ENCODE measurements at regions of chr6 and their contacts with region 1.

Region 1: GRCh38 chr6:30914076-30914853 is at the start of gene VARS2:
- DNase-seq: peak; percentile 83
- ATAC-seq: peak; percentile 85
- H3K4me3 Mint-ChIP-seq: peak within 1 kb of the TSS; percentile 90
- H3K27ac Mint-ChIP-seq: peak within 1 kb of the TSS; percentile 90
- H3K4me1 Mint-ChIP-seq: peaks cover 22% of the 10 kb centered on the region
- H3K27me3 Mint-ChIP-seq: no peaks in the 10 kb centered on the region
- CTCF ChIP-seq: no peak
- total RNA-seq, gene VARS2: 65.6 to 74.1 TPM (median 69.9 TPM) in 3 replicates

Region 2: GRCh38 chr6:30828027-30828960 is 86.0 kb before region 1 on chr6:
- CTCF ChIA-PET with region 1: interaction called, 38 read pairs
- POLR2A ChIA-PET with region 1: no interaction called
- DNase-seq: peak; percentile 87
- ATAC-seq: peak; percentile 81
- H3K4me3 Mint-ChIP-seq: no peak overlapping the region
- H3K27ac Mint-ChIP-seq: peak overlapping the region; percentile 66; the same call in 1 of the 2 replicates
- H3K4me1 Mint-ChIP-seq: peaks cover 40% of the 10 kb centered on the region
- H3K27me3 Mint-ChIP-seq: no peaks in the 10 kb centered on the region
- CTCF ChIP-seq: peak; percentile 79

Region 3: GRCh38 chr6:30883685-30884520 is 30.4 kb before region 1 on chr6 and contains the start of gene DDR1:
- CTCF ChIA-PET with region 1: interaction called, 56 read pairs
- POLR2A ChIA-PET with region 1: interaction called, 12 read pairs
- DNase-seq: peak; percentile 58
- ATAC-seq: peak; percentile 4
- H3K4me3 Mint-ChIP-seq: peak within 1 kb of the TSS; percentile 93
- H3K27ac Mint-ChIP-seq: peak within 1 kb of the TSS; percentile 99
- H3K4me1 Mint-ChIP-seq: peaks cover 71% of the 10 kb centered on the region
- H3K27me3 Mint-ChIP-seq: no peaks in the 10 kb centered on the region
- CTCF ChIP-seq: no peak
- total RNA-seq, gene DDR1: 195 to 230 TPM (median 203 TPM) in 3 replicates

Region 4: DNA sequence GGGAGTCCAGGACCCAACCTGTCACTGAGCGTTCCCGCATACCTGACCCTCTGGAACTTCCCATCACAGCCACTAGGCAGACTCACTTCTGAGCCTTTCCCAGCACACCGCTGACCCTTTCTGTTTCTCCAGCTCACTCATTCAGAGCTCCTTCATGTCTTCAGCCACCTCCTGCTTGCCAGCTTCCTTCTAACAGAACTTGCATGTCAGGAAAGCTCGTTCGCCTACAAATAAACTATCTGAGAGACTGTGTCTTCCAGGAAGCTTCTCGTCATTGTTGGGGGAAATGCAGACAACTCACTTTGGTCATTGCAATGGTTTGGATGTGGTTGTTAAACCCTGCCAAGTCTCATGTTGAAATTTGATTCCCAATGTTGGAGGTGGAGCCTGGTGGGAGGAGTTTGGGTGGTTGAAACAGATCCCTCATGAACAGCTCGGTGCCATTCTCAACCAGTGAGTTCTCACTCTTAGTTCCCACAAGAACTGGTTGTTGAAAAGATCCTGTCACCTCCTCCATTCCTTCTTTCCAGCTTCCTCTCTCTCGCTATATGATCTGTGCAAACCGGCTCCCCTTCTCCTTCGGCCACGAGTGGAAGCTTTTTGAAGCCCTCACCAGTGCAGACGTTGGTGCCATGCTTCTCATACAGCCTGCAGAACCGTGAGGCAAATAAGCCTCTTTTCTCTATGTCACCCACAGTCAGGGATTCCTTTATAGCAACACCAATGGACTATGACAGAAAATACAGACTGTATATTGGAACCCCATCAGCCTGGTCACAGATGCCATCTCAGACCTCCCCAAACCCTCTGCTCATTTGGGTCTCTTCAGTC is 67.9 kb after region 1 on chr6:
- CTCF ChIA-PET with region 1: interaction called, 15 read pairs
- POLR2A ChIA-PET with region 1: interaction called, 3 read pairs
- DNase-seq: peak; percentile 67
- ATAC-seq: peak; percentile 99
- H3K4me3 Mint-ChIP-seq: peak overlapping the region; percentile 57
- H3K27ac Mint-ChIP-seq: peak overlapping the region; percentile 92
- H3K4me1 Mint-ChIP-seq: peaks cover 21% of the 10 kb centered on the region
- H3K27me3 Mint-ChIP-seq: no peaks in the 10 kb centered on the region; the same call in none of the 2 replicates
- CTCF ChIP-seq: no peak

Region 5: DNA sequence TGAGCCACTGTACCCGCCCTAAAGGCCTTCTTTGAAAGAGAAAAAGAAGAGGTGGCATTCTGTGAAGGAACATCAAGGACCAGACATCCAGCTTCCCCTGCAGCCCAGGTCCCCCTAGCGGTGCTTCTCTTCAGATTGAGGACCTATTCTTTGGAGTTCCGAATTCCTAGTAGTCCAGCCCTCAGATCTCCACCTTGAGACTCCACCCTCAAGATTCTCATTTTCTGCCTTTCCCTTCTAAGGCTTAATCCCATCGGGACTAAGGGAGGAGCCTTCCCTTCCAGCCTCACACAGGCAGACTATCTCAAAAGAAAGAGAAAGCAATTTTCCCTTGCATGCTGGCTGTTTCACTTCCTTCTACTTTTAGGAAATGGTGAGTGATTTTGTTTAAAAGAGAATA is 128.5 kb after region 1 on chr6:
- CTCF ChIA-PET with region 1: interaction called, 19 read pairs
- POLR2A ChIA-PET with region 1: interaction called, 4 read pairs
- DNase-seq: peak; percentile 72
- ATAC-seq: peak; percentile 94
- H3K4me3 Mint-ChIP-seq: no peak overlapping the region
- H3K27ac Mint-ChIP-seq: no peak overlapping the region
- H3K4me1 Mint-ChIP-seq: no peaks in the 10 kb centered on the region; the same call in 1 of the 2 replicates
- H3K27me3 Mint-ChIP-seq: no peaks in the 10 kb centered on the region
- CTCF ChIP-seq: peak; percentile 54

Region 6: GRCh38 chr6:31068669-31069340 is 154.5 kb after region 1 on chr6:
- CTCF ChIA-PET with region 1: interaction called, 124 read pairs
- POLR2A ChIA-PET with region 1: interaction called, 4 read pairs
- DNase-seq: peak; percentile 84
- ATAC-seq: peak; percentile 62
- H3K4me3 Mint-ChIP-seq: no peak overlapping the region
- H3K27ac Mint-ChIP-seq: 0 out of 2 replicates have a peak overlapping the region, but pooled peaks have one; percentile 42
- H3K4me1 Mint-ChIP-seq: peaks cover 25% of the 10 kb centered on the region
- H3K27me3 Mint-ChIP-seq: no peaks in the 10 kb centered on the region
- CTCF ChIP-seq: peak; percentile 90

Measured in WTC11 (cell line).